A673 (cell line): ENCODE measurements at regions of chr7 and their contacts with region 1.

Region 1: GRCh38 chr7:78020136-78020873 is 221.7 kb downstream of the PHTF2 start:
- DNase-seq: peak; percentile 86
- H3K4me3 ChIP-seq: peak overlapping the region; percentile 54
- H3K27ac ChIP-seq: peak overlapping the region; percentile 3
- H3K4me1 ChIP-seq: peaks cover 13% of the 10 kb centered on the region
- H3K27me3 ChIP-seq: no peaks in the 10 kb centered on the region
- CTCF ChIP-seq: peak; percentile 85

Region 2: GRCh38 chr7:77657427-77658224 is 362.7 kb before region 1 on chr7:
- CTCF ChIA-PET with region 1: no interaction called
- POLR2A ChIA-PET with region 1: no interaction called
- intact Hi-C with region 1: loop called (anchors 10 kb)
- DNase-seq: peak; percentile 77
- H3K4me3 ChIP-seq: no peak overlapping the region
- H3K27ac ChIP-seq: no peak overlapping the region
- H3K4me1 ChIP-seq: no peaks in the 10 kb centered on the region
- H3K27me3 ChIP-seq: no peaks in the 10 kb centered on the region
- CTCF ChIP-seq: peak; percentile 65

Region 3: DNA sequence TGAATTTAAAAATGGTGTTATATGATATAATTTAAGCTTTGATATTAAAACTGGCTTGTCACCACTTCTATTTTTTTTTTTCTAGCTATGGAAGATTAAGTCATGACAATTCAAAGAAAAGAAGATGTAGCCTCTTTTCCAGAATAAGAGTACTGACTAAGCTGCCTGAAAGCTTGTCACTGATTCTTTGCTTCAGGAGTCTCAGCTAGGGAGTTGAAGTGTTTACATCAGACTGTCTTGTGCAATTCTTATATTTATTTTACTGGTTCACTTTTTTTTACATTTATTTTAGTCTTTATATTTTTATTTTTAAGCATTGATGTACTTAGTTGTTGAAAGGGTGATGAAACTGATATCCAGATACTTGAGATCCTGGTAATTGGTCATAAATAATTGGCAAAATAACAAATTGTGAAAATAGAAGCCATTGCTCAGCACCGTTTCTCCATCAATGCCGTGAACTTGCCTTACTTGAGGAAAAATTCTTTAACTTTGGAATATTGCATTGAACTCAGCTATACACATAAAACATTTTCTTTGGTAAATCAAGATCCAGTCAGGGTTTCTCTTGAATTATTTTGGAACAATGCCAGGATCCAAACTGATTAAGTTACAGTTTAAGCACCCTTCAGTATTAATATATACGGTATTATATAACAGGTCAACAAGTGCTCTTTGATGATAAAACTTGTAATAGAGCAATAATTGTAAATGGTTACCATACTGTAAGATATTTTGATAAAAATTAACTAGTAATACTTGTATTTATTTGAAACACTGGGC is 65.3 kb before region 1 on chr7:
- CTCF ChIA-PET with region 1: no interaction called
- POLR2A ChIA-PET with region 1: no interaction called
- intact Hi-C with region 1: no loop called
- DNase-seq: no peak
- H3K4me3 ChIP-seq: no peak overlapping the region
- H3K27ac ChIP-seq: no peak overlapping the region
- H3K4me1 ChIP-seq: no peaks in the 10 kb centered on the region
- H3K27me3 ChIP-seq: no peaks in the 10 kb centered on the region
- CTCF ChIP-seq: no peak

Region 4: GRCh38 chr7:78134256-78134655 is 114.0 kb after region 1 on chr7:
- CTCF ChIA-PET with region 1: interaction called, 10 read pairs
- POLR2A ChIA-PET with region 1: no interaction called
- intact Hi-C with region 1: loop called (anchors 5 kb)
- DNase-seq: peak; percentile 68
- H3K4me3 ChIP-seq: no peak overlapping the region
- H3K27ac ChIP-seq: no peak overlapping the region
- H3K4me1 ChIP-seq: peaks cover 1% of the 10 kb centered on the region
- H3K27me3 ChIP-seq: no peaks in the 10 kb centered on the region
- CTCF ChIP-seq: peak; percentile 68

Region 5: DNA sequence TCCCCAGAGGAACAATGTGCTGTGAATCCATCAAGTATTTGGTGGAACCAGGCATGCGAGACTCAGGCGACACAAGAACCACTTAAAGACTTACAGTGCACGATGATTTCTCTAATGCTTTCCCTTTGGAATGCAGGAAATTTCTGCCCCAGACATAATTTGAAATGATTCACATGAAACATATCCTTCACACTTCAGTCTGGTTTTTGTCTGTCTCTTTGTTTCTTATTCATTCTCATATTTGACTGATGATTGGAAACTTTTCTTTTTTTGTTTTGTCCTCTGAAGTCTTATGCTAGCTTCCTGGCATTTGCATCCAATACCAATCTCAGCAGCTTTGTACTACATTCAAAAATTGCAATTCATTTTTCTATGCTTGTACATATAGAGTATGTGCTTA is 281.1 kb after region 1 on chr7:
- CTCF ChIA-PET with region 1: no interaction called
- POLR2A ChIA-PET with region 1: no interaction called
- intact Hi-C with region 1: loop called (anchors 10 kb)
- DNase-seq: no peak
- H3K4me3 ChIP-seq: no peak overlapping the region
- H3K27ac ChIP-seq: no peak overlapping the region
- H3K4me1 ChIP-seq: no peaks in the 10 kb centered on the region
- H3K27me3 ChIP-seq: peaks cover 7% of the 10 kb centered on the region
- CTCF ChIP-seq: no peak

Region 6: DNA sequence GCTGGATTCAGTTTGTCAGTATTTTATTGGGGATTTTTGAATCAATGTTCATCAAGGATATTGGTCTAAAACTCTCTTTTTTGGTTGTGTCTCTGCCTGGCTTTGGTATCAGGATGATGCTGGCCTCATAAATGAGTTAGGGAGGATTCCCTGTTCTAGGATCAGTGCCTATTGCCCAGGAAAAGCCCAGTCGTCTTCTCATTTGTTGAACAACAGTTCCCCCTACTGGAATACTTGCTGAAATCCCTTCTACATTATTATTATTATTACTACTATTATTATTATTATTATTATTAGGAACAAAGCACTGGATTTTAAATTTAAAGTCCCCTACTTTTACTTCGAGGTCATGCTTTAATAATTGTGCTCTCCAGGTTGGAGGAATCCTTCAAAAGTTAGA is 904.3 kb after region 1 on chr7:
- CTCF ChIA-PET with region 1: no interaction called
- POLR2A ChIA-PET with region 1: no interaction called
- intact Hi-C with region 1: loop called (anchors 10 kb)
- DNase-seq: peak; percentile 40
- H3K4me3 ChIP-seq: no peak overlapping the region
- H3K27ac ChIP-seq: no peak overlapping the region
- H3K4me1 ChIP-seq: no peaks in the 10 kb centered on the region
- H3K27me3 ChIP-seq: peaks cover 5% of the 10 kb centered on the region
- CTCF ChIP-seq: peak; percentile 49